ENCODE measurements at regions of chr16 and their contacts with region 1.

Region 1: GRCh38 chr16:57720142-57720575 is 15.4 kb upstream of the KATNB1 start:
- DNase-seq: peak; percentile 60 to 73 (median 68)
- ATAC-seq: peak; percentile 94
- H3K4me3 ChIP-seq: no peak overlapping the region
- H3K27ac ChIP-seq: no peak overlapping the region
- H3K4me1 ChIP-seq: peaks cover 9 to 12% of the 10 kb centered on the region in 2 experiments; a peak in 4 of 5 replicates
- H3K27me3 ChIP-seq: peaks cover 4 to 14% of the 10 kb centered on the region in 2 experiments; a peak in 4 of 5 replicates
- CTCF ChIP-seq: peak; percentile 82 to 93 (median 83)
- EP300 ChIP-seq: no peak
- POLR2A ChIP-seq: no peak
- RAD21 ChIP-seq: peak; percentile 85 to 95

Region 2: GRCh38 chr16:57591086-57591869 is 128.9 kb before region 1 on chr16:
- CTCF ChIA-PET with region 1: interaction called, 13 read pairs
- POLR2A ChIA-PET with region 1: no interaction called
- in situ Hi-C with region 1: no loop called
- intact Hi-C with region 1: loop called (anchors 5 kb)
- DNase-seq: peak; percentile 80 to 85 (median 82)
- ATAC-seq: peak; percentile 100
- H3K4me3 ChIP-seq: no peak overlapping the region
- H3K27ac ChIP-seq: no peak overlapping the region
- H3K4me1 ChIP-seq: peaks cover 6 to 11% of the 10 kb centered on the region in 2 experiments; a peak in 4 of 5 replicates
- H3K27me3 ChIP-seq: peaks cover 2 to 8% of the 10 kb centered on the region in 2 experiments; a peak in 2 of 5 replicates
- CTCF ChIP-seq: peak; percentile 94 to 99 (median 99)
- EP300 ChIP-seq: no peak
- POLR2A ChIP-seq: no peak
- RAD21 ChIP-seq: peak; percentile 81 to 94

Region 3: DNA sequence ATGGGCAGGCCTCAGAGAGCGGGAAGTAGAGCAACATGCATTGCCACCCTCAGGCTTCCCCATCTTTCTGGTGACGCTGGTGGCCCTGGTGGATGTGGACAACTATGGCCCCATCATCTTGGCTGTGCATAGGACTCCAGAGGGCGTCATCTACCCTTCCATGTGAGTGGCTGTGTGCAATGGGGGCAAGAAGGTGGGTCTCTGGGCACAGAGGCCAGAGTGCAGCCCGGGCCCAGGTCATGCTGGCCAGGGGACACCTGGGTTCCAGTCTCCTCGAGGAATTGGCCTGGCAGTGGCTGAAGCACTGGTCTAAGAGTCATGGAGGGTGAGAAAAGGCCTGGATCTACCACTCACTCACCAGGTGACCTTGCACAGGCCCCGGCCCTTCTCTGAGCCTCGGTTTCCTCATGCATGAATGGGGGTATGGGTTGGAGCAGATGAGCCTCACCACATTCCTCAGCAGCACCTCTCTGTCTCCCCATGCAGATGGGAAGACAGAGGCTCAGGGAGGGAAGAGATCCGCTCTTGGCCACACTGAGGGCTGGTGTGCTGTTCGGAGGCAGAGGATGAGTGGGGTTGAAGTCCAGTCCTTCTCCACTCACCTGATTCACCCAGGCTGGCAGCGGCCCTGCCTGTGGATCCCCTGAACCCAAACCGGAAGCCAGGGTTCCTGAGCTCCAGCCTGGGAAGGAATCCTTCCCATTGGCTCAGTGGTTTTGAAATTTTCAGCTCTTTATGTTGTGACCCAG is 59.3 kb before region 1 on chr16:
- CTCF ChIA-PET with region 1: interaction called, 13 read pairs
- POLR2A ChIA-PET with region 1: no interaction called
- in situ Hi-C with region 1: loop called (anchors 5 kb)
- intact Hi-C with region 1: loop called (anchors 2 kb)
- DNase-seq: peak in 2 of 4 experiments; percentile 33 to 39
- ATAC-seq: peak; percentile 77
- H3K4me3 ChIP-seq: no peak overlapping the region
- H3K27ac ChIP-seq: no peak overlapping the region
- H3K4me1 ChIP-seq: peaks cover 0 to 12% of the 10 kb centered on the region in 2 experiments; a peak in 1 of 5 replicates
- H3K27me3 ChIP-seq: 0 out of 5 replicates have a peak, but pooled peaks cover 0 to 5% of the 10 kb centered on the region in 2 experiments
- CTCF ChIP-seq: peak; percentile 60 to 73 (median 61); a peak in 5 of 6 replicates
- EP300 ChIP-seq: no peak
- POLR2A ChIP-seq: no peak
- RAD21 ChIP-seq: peak; percentile 80 to 90

Region 4: DNA sequence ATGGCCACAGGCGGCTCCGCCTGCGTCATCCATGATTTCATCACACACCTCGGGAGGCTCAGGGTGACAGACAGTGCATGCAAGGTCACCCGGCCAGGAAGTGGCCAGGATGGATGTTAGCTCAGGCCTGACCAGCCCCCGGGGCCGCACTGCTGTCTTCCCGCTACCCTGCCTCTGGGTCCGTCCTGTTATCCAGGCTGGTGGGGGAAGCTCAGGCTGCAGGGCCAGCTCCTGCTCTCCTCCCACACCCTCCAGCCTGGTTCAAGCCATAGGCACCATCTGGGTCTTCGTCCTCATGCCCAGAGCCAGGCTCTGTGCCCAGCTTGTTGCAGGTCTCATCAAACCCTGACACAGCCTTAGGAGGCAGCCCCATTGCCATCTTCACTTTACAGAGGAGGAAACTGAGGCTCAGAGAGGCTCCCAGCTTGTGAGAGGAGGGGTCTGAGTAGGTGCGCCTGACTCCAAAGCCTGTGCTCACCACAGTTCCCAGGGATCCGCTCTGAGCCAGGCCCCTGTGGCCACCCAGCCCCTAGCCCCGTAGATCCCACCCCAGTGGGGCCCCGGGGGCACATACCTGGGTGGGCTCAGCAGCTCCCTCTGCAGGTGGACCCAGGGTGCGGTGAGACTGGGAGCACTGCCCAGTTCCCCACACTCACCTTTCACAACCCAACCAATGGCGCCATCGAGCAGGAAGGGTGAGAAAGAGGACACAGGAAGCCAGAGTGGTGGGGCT is 52.5 kb before region 1 on chr16:
- CTCF ChIA-PET with region 1: no interaction called
- POLR2A ChIA-PET with region 1: no interaction called
- in situ Hi-C with region 1: loop called (anchors 5 kb)
- intact Hi-C with region 1: no loop called
- DNase-seq: peak; percentile 72 to 78 (median 75)
- ATAC-seq: peak; percentile 95
- H3K4me3 ChIP-seq: no peak overlapping the region
- H3K27ac ChIP-seq: peak overlapping the region; percentile 72
- H3K4me1 ChIP-seq: peaks cover 24 to 38% of the 10 kb centered on the region in 2 experiments
- H3K27me3 ChIP-seq: no peaks in the 10 kb centered on the region
- CTCF ChIP-seq: peak; percentile 48 to 63 (median 51)
- EP300 ChIP-seq: peak; percentile 84
- POLR2A ChIP-seq: no peak
- RAD21 ChIP-seq: 0 out of 4 replicates have a peak, but pooled peaks of 1 of the 2 experiments have one; percentile 18